CD4-positive, alpha-beta memory T cell (primary cell): ENCODE measurements at regions of chr5 and their contacts with region 1.

Region 1: DNA sequence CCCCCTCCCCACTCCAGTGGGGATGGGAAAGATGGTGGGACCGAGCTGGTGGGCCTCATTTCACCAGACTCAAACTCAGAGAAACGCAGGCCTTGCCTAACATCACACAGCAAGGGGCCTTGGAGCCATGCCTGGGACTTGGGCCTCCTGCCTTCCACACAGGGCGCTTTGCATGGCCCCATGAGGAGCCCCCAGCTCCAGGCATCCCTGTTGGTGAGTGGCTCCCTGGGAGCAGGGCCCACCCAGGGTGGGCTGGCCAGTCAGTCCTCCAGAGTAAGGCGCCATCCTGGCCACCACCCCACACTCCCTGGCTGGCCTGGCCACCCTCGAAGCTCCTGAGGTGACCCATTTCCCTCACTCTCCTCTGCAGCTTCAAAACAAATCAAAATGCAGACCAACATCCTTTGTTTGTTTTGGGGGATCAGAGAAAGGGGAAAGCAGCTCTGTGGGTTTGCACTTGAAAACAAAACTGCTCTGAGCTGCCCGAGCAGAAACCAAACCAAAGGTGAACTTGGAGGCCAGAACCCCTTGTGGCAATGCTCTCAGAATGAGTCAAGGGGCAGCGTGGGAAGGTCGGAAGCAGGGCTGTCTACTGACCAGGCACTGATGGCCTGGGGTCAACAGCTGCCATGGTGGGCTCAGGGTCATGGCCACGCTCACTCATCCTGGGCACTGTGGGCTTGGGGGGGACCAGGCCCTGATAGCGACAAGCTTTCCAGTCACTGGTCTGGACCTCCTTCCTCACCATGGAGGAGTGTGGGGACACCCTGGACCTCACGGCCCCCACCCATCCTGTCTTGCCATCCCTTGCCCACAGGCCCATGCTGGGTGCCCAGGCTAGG is 37.0 kb upstream of the VDAC1 start:
- DNase-seq: no peak
- H3K4me3 ChIP-seq: no peak overlapping the region
- H3K4me3 Mint-ChIP-seq: peak overlapping the region in 4 of 8 donors; percentile 21 to 67 (median 29)
- H3K27ac ChIP-seq: no peak overlapping the region
- H3K27ac Mint-ChIP-seq: peak overlapping the region in 5 of 7 donors; percentile 30 to 80 (median 74)
- H3K4me1 ChIP-seq: peaks cover 40% of the 10 kb centered on the region
- H3K4me1 Mint-ChIP-seq: peaks cover 16 to 53% (median 38%) of the 10 kb centered on the region in 4 donors
- H3K27me3 ChIP-seq: no peaks in the 10 kb centered on the region
- H3K27me3 Mint-ChIP-seq: no peaks in the 10 kb centered on the region

Region 2: GRCh38 chr5:133868946-133869518 is 172.8 kb before region 1 on chr5:
- CTCF ChIA-PET with region 1: no interaction called
- POLR2A ChIA-PET with region 1: no interaction called
- intact Hi-C with region 1: no loop called
- DNase-seq: peak; percentile 46 to 58 (median 51)
- H3K4me3 ChIP-seq: no peak overlapping the region
- H3K4me3 Mint-ChIP-seq: peak overlapping the region in 1 of 8 donors; percentile 30
- H3K27ac ChIP-seq: no peak overlapping the region
- H3K27ac Mint-ChIP-seq: no peak overlapping the region
- H3K4me1 ChIP-seq: no peaks in the 10 kb centered on the region
- H3K4me1 Mint-ChIP-seq: peaks cover 0 to 3% (median under 1%) of the 10 kb centered on the region in 4 donors
- H3K27me3 ChIP-seq: no peaks in the 10 kb centered on the region
- H3K27me3 Mint-ChIP-seq: peaks cover 5 to 16% of the 10 kb centered on the region in 2 donors

Region 3: DNA sequence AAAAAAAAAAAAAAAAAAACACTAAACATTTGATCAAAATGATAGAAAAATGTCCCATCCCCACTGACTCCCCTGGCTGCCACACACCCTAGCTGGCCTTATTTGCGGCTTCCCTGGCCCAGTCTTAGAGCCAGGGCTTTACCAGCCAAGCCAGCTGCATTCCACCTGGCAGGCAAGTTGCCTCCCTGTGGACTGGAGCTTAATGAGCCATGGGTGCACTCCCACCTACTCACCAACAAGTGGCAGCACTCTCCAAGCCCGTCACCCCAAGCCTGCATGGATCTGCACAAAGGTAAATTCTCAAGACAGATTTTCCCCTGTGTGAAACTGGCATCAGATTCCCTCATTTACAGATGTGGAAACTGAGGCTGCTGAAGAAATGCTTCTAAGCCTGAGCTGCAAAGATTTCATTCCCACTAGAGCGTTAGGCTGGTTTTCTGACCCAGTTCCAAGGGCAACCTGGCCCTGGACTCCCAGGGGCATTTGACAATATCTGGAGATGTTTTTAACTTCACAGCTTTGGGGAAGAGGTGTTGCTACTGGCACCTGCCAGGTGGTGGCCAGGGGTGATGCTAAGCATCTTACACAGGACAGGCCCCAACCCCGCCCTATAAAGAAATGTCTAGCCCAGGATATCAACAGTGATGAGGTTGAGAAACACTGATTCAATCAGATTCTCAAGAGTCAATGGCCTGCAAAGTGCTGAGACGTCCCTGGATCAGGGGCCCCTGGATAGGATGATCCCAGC is 15.1 kb before region 1 on chr5:
- CTCF ChIA-PET with region 1: interaction called, 14 read pairs
- POLR2A ChIA-PET with region 1: interaction called, 3 read pairs
- intact Hi-C with region 1: no loop called
- DNase-seq: peak; percentile 41 to 64 (median 48)
- H3K4me3 ChIP-seq: no peak overlapping the region
- H3K4me3 Mint-ChIP-seq: no peak overlapping the region
- H3K27ac ChIP-seq: no peak overlapping the region
- H3K27ac Mint-ChIP-seq: peak overlapping the region in 1 of 7 donors; percentile 70
- H3K4me1 ChIP-seq: no peaks in the 10 kb centered on the region
- H3K4me1 Mint-ChIP-seq: peaks cover 0 to 2% (median 0%) of the 10 kb centered on the region in 4 donors
- H3K27me3 ChIP-seq: no peaks in the 10 kb centered on the region
- H3K27me3 Mint-ChIP-seq: peaks cover 0 to 9% of the 10 kb centered on the region in 2 donors

Region 4: DNA sequence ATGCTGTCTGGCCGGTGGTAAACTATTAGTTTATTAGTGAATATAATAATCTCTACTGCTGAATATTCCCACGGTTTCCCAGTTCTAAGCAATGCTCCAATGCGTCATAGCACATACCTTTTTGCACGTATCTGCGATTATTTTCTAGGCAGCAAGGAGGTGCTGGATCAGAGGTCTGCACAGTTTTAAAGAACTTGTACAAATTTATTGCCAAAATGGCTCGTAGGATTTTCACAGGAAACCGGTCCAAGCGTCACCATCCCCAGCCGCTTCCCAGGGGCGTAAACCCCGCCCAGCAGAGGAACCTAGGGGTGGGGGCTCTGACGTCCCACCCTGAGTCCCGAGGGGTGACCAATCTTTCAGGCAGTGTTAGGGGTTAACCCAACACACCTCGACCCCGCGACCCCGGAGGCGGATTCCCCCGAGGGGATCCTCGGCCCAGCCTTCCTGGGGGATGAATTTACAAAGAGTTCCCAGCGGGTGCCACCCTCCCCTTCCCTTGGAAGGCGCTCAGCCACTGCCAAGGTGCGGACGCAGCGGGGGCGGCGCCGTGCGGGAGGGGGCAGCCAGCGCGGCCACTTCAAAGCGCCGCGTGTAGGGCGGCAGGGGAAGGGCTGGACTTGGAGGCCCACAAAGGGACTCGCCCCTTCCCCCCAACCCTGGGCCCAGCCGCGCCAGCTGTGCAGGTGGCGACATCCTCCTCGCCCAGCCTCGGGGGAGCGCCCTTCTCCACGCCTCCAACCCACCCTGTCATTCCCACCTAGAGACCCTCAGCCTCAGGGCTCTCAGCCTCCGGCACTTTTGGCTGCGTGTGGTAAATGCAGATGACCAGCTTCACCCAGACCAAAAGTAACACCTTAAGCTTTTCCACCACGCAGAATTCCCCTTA is 29.2 kb after region 1 on chr5:
- CTCF ChIA-PET with region 1: interaction called, 35 read pairs
- POLR2A ChIA-PET with region 1: interaction called, 8 read pairs
- intact Hi-C with region 1: no loop called
- DNase-seq: peak in 2 of 5 donors; percentile 32 to 59
- H3K4me3 ChIP-seq: peak overlapping the region; percentile 39 to 53
- H3K4me3 Mint-ChIP-seq: peak overlapping the region; percentile 84 to 92 (median 88)
- H3K27ac ChIP-seq: peak overlapping the region; percentile 48
- H3K27ac Mint-ChIP-seq: peak overlapping the region; percentile 79 to 93 (median 87)
- H3K4me1 ChIP-seq: peaks cover 60% of the 10 kb centered on the region
- H3K4me1 Mint-ChIP-seq: peaks cover 42 to 70% (median 56%) of the 10 kb centered on the region in 4 donors
- H3K27me3 ChIP-seq: no peaks in the 10 kb centered on the region
- H3K27me3 Mint-ChIP-seq: no peaks in the 10 kb centered on the region

Region 5: GRCh38 chr5:134092878-134093277 is 51.1 kb after region 1 on chr5:
- CTCF ChIA-PET with region 1: interaction called, 15 read pairs
- POLR2A ChIA-PET with region 1: interaction called, 31 read pairs
- intact Hi-C with region 1: no loop called
- DNase-seq: no peak
- H3K4me3 ChIP-seq: no peak overlapping the region
- H3K4me3 Mint-ChIP-seq: peak overlapping the region in 7 of 8 donors; percentile 9 to 77 (median 57)
- H3K27ac ChIP-seq: no peak overlapping the region
- H3K27ac Mint-ChIP-seq: peak overlapping the region; percentile 72 to 94 (median 79)
- H3K4me1 ChIP-seq: peaks cover 79% of the 10 kb centered on the region
- H3K4me1 Mint-ChIP-seq: peaks cover 58 to 86% (median 75%) of the 10 kb centered on the region in 4 donors
- H3K27me3 ChIP-seq: no peaks in the 10 kb centered on the region
- H3K27me3 Mint-ChIP-seq: no peaks in the 10 kb centered on the region

Region 6: GRCh38 chr5:134125039-134126015 is 83.5 kb after region 1 on chr5:
- CTCF ChIA-PET with region 1: interaction called, 113 read pairs
- POLR2A ChIA-PET with region 1: interaction called, 192 read pairs
- intact Hi-C with region 1: no loop called
- DNase-seq: no peak
- H3K4me3 ChIP-seq: peak overlapping the region; percentile 36 to 63
- H3K4me3 Mint-ChIP-seq: peak overlapping the region; percentile 86 to 99 (median 96)
- H3K27ac ChIP-seq: peak overlapping the region; percentile 97
- H3K27ac Mint-ChIP-seq: peak overlapping the region; percentile 95 to 99 (median 98)
- H3K4me1 ChIP-seq: peaks cover 100% of the 10 kb centered on the region
- H3K4me1 Mint-ChIP-seq: peaks cover 44 to 99% (median 77%) of the 10 kb centered on the region in 4 donors
- H3K27me3 ChIP-seq: no peaks in the 10 kb centered on the region
- H3K27me3 Mint-ChIP-seq: no peaks in the 10 kb centered on the region

Region 7: DNA sequence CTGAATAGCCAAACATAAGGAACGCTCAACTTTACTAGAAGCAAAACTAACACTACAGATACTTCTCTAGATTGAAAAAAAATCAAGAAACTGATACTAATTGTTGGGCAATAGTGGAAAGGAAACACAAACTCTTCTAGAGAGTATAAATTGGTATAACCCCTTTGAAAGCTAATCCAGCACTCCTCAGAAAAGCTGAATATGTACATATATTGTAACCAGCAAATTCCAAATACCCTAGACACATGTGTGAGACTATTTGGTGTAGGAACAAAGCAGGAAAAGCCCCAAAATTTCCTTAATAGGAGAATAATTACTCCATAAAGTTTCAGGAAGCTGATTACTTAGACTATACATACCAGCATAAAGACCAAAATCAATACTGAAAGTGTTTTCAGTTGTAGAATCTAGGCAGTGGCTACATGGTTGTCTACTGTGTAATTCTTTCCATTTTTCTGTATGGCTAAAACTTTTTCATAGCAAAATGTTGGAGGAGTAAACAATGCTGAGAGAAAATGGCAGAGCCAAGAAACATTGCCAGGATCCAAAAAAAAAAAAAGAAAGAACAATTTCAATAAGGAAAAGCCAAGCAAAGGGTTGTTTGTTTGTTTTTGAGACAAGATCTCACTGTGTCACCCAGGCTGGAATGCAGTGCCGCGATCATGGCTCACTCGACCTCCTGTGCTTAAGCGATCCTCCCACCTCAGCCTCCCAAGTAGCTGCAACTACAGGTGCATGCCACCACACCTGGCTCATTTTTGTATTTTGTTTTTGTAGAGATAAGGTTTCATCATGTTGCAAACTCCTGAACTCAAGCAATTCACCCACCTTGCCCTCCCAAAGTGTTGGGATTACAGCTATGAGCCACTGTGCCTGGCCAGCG is 120.0 kb after region 1 on chr5:
- CTCF ChIA-PET with region 1: interaction called, 603 read pairs
- POLR2A ChIA-PET with region 1: no interaction called
- intact Hi-C with region 1: no loop called
- DNase-seq: no peak
- H3K4me3 ChIP-seq: no peak overlapping the region
- H3K4me3 Mint-ChIP-seq: no peak overlapping the region
- H3K27ac ChIP-seq: no peak overlapping the region
- H3K27ac Mint-ChIP-seq: peak overlapping the region in 5 of 7 donors; percentile 9 to 55 (median 22)
- H3K4me1 ChIP-seq: peaks cover 3% of the 10 kb centered on the region
- H3K4me1 Mint-ChIP-seq: peaks cover 21 to 44% (median 32%) of the 10 kb centered on the region in 4 donors
- H3K27me3 ChIP-seq: no peaks in the 10 kb centered on the region
- H3K27me3 Mint-ChIP-seq: no peaks in the 10 kb centered on the region

Region 8: DNA sequence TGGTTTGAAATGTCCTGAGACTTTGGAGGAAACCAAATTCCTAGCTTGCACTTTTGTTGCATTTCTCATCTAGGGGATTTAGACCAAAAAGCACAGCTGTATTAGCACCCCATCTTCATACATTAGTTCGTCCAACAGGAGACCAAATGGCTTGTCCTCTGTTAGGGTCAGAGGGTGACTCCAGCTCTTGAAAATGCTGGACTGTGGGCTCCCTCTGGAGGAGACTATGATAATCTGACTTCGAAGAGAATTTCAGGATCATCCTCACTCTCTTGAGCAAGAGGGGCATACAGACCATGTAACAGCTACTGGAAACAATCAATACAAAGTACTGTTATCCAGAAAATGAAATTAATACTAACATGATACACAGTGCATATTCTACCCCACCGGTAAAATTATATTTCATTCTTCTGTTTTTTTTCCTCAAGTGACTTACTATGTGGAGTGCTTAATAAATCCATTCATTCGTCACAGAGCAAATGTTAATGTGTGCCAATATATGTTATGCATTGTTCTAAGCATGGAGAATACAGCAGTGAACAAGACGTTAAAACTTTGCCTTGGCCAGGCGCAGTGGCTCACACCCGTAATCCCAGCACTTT is 247.8 kb after region 1 on chr5:
- CTCF ChIA-PET with region 1: interaction called, 27 read pairs
- POLR2A ChIA-PET with region 1: no interaction called
- intact Hi-C with region 1: loop called (anchors 1 kb)
- DNase-seq: peak; percentile 50 to 55 (median 52)
- H3K4me3 ChIP-seq: no peak overlapping the region
- H3K4me3 Mint-ChIP-seq: no peak overlapping the region
- H3K27ac ChIP-seq: no peak overlapping the region
- H3K27ac Mint-ChIP-seq: peak overlapping the region in 2 of 7 donors; percentile 17 to 32
- H3K4me1 ChIP-seq: no peaks in the 10 kb centered on the region
- H3K4me1 Mint-ChIP-seq: no peaks in the 10 kb centered on the region
- H3K27me3 ChIP-seq: no peaks in the 10 kb centered on the region
- H3K27me3 Mint-ChIP-seq: peaks cover 3 to 5% of the 10 kb centered on the region in 2 donors